Caco-2 (cell line): ENCODE measurements at regions of chr3 and their contacts with region 1.

Region 1: DNA sequence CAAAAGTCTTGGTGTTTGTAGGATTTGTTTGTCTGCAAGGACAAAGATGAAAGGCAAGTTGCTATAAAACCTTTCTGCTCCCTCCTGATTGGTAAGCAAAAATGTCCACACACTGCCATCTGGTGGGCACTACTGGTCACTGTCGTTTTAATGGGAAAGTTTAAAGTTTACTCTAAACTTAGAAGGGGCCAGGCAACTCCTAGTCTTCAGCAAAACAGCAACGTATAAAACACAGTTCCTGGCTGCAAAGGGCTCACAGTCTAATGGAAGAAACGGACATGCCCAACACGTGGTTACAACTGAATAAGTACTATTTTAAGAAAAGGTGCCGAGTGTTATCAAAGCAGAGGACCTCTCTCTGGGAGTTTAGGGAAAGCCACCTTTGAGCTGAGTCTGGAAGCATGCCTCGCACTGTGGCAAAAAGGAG is 23.7 kb upstream of the TPRG1 start:
- DNase-seq: peak; percentile 57 to 66
- H3K4me3 ChIP-seq: no peak overlapping the region
- H3K4me3 Mint-ChIP-seq: no peak overlapping the region
- H3K27ac Mint-ChIP-seq: no peak overlapping the region
- H3K4me1 ChIP-seq: no peaks in the 10 kb centered on the region
- H3K4me1 Mint-ChIP-seq: peaks cover 13% of the 10 kb centered on the region
- H3K27me3 ChIP-seq: no peaks in the 10 kb centered on the region
- H3K27me3 Mint-ChIP-seq: no peaks in the 10 kb centered on the region
- CTCF ChIP-seq: peak; percentile 66 to 74

Region 2: GRCh38 chr3:188978421-188979171 is 169.5 kb before region 1 on chr3:
- CTCF ChIA-PET with region 1: no interaction called
- POLR2A ChIA-PET with region 1: no interaction called
- intact Hi-C with region 1: loop called (anchors 5 kb)
- DNase-seq: no peak
- H3K4me3 ChIP-seq: no peak overlapping the region
- H3K4me3 Mint-ChIP-seq: no peak overlapping the region
- H3K27ac Mint-ChIP-seq: no peak overlapping the region
- H3K4me1 ChIP-seq: no peaks in the 10 kb centered on the region
- H3K4me1 Mint-ChIP-seq: peaks cover 6% of the 10 kb centered on the region
- H3K27me3 ChIP-seq: no peaks in the 10 kb centered on the region
- H3K27me3 Mint-ChIP-seq: no peaks in the 10 kb centered on the region
- CTCF ChIP-seq: no peak

Region 3: DNA sequence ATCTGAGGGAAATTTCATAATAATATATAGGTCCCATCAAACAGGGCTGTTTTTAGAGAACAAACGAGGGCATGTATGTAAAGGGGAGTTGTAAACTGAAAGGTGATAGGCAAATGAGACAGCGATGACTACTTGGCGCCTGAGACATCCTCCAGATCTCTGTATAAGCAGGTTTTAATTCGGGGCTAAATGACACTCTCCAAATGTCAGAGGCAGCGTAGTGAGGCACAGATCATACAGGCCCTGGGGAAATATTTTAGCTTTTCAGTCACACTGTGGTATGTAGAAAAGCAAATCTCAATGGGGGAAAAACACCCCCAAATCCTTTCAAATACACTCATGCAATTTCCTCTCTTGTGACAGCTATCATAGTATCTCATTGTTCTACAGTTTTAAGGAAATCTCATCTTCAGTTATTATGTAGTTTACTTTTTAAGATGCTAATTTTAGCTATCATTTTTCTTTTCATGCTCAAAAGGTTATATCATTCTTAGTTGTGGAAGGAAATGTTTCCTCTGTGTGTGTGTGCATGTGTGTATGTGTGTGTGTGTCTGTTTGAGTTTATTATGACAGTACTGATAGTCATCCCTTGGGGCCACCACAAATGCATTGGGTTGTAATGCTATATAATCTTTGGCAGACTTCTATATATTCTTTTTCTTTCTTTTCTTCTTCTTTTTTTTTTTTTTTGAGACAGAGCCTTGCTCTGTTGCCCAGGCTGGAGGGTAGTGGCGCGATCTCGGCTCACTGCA is 24.8 kb after region 1 on chr3:
- CTCF ChIA-PET with region 1: no interaction called
- POLR2A ChIA-PET with region 1: no interaction called
- intact Hi-C with region 1: no loop called
- DNase-seq: no peak
- H3K4me3 ChIP-seq: no peak overlapping the region
- H3K4me3 Mint-ChIP-seq: no peak overlapping the region
- H3K27ac Mint-ChIP-seq: no peak overlapping the region
- H3K4me1 ChIP-seq: no peaks in the 10 kb centered on the region
- H3K4me1 Mint-ChIP-seq: no peaks in the 10 kb centered on the region
- H3K27me3 ChIP-seq: no peaks in the 10 kb centered on the region
- H3K27me3 Mint-ChIP-seq: no peaks in the 10 kb centered on the region
- CTCF ChIP-seq: no peak